Activated naive CD4-positive, alpha-beta T cell treated with anti-CD3 and anti-CD28 coated beads, Interleukin-2, amount 10 ng/mL, durations not matched to agents 7 days and 5 days (primary cell): ENCODE measurements at regions of chr1 and their contacts with region 1.

Region 1: DNA sequence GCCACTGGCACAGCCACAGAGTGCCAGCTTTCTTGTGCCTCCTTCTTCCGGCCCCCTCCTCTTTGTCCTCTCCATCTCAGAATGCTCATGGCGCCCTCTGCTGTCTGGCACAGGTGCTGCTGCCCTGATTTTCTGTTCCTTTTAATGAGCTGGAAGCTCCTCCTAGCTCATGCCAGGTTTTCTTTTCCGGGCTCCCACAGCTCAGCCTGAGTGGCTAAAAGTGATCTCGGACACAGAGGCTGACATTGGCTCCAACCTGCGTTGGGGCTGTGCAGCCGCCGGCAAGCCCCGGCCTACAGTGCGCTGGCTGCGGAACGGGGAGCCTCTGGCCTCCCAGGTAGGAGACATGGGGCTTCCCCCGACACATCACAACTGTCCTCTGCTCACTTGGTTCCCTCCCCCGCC is 18.7 kb downstream of the CNTN2 start:
- DNase-seq: peak; percentile 88
- H3K4me3 Mint-ChIP-seq: no peak overlapping the region
- H3K27ac Mint-ChIP-seq: no peak overlapping the region
- H3K4me1 Mint-ChIP-seq: no peaks in the 10 kb centered on the region
- H3K27me3 Mint-ChIP-seq: peaks cover 12% of the 10 kb centered on the region

Region 2: DNA sequence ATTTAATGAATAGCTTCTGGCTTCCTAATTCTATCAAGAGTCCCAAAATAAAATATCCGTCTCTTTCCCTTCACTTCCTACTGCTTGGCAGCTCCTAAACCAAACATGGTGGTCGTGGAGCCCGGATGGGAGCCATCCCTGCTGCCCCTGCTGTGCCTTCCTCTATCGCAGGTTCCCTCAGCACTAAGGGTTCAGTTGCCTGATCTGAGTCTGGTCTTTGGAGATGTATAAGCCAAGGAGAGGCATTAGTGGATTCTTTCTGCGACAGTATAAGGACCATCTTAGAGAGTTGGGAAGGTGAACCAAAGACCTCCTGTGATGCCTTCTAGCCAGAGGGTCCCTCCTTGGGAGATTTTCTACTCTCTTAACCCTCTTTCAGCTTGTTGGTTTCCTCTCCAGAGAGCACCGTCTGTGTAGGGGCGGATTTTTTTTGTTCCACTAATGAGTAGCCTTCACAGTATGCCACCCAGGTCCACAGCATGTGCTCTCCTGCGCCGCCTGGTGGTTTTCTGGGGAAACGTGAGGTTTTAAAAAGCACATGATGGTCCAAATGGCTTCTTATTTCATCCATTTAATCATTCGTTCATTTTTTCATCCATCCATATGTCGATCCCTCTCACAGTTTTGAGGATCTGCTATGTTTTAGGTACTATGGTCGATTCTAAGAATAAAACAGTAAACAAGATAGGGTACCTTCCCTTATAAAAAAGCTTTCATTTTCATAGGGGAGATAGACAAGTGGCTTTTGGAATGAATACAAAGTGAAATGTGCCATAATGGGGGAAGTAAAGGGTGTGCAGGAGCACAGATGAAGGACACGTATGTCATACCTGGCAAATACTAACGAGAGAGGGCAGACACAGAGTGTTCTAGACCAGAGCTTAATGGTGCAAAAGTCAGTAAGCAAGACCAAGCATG is 120.0 kb before region 1 on chr1:
- CTCF ChIA-PET with region 1: interaction called, 17 read pairs
- DNase-seq: peak; percentile 72
- H3K4me3 Mint-ChIP-seq: no peak overlapping the region
- H3K27ac Mint-ChIP-seq: no peak overlapping the region
- H3K4me1 Mint-ChIP-seq: no peaks in the 10 kb centered on the region
- H3K27me3 Mint-ChIP-seq: peaks cover 27% of the 10 kb centered on the region

Region 3: DNA sequence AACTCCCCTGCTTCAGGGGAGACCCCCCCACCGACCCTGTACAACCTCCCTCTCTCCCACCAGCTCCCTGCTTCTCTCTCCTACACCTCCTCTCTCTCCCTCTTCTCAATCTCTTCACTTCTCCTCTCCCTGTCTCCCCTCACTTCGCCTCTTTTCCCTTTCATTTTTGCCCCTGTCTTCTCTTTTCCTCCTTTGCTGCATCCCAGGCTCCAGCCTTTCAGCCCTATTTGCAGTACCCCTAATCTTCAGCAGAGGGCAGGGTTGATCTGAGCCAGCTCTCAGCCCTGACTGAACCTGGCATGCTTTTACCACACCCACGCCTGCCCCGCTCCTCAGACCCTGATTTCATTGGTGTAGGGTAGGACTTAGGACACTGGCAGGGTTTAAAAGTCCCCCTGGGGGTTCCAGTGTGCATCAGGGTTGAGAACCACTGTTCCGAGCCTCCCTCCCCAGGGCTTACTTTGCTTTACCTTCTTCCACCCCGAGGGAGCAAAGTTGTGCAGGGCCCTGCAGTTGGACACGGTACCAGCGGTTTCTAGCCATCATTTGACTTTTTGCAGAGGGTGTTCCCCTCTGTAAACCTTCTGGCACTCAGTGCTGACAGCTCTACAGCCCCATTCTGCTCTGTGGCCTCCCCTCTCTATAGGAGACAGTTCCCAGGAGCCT is 86.0 kb before region 1 on chr1:
- CTCF ChIA-PET with region 1: interaction called, 83 read pairs
- DNase-seq: peak; percentile 64
- H3K4me3 Mint-ChIP-seq: no peak overlapping the region
- H3K27ac Mint-ChIP-seq: no peak overlapping the region
- H3K4me1 Mint-ChIP-seq: no peaks in the 10 kb centered on the region
- H3K27me3 Mint-ChIP-seq: peaks cover 62% of the 10 kb centered on the region

Region 4: DNA sequence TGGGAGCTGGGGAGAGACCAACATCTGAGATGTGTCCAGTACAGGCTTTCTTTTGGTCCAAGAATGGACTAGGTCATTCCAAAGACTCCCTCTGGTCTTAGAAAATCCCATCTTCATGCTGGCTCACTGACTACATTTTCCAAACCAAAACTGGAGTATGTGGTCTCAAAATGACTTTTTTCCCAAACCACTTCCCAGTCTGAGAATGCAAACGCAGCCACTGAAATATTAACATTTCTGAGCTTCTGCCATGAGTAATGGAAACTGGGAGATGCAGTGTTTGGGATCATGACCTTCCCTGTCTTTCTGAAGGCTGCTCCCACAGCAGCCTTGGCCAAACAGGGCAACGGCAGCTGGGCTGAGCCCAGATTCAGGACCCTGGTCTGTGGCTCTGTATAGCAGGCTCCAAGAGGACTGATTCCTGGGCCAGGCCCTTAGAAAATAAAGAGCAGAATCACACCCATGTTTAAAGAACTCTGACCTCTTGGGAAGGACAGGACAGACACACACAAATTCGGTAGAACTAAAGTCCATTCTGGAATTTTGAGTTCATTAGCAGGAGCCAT is 80.7 kb before region 1 on chr1:
- CTCF ChIA-PET with region 1: interaction called, 83 read pairs
- DNase-seq: no peak
- H3K4me3 Mint-ChIP-seq: no peak overlapping the region
- H3K27ac Mint-ChIP-seq: no peak overlapping the region
- H3K4me1 Mint-ChIP-seq: peaks cover 10% of the 10 kb centered on the region
- H3K27me3 Mint-ChIP-seq: peaks cover 52% of the 10 kb centered on the region

Region 5: DNA sequence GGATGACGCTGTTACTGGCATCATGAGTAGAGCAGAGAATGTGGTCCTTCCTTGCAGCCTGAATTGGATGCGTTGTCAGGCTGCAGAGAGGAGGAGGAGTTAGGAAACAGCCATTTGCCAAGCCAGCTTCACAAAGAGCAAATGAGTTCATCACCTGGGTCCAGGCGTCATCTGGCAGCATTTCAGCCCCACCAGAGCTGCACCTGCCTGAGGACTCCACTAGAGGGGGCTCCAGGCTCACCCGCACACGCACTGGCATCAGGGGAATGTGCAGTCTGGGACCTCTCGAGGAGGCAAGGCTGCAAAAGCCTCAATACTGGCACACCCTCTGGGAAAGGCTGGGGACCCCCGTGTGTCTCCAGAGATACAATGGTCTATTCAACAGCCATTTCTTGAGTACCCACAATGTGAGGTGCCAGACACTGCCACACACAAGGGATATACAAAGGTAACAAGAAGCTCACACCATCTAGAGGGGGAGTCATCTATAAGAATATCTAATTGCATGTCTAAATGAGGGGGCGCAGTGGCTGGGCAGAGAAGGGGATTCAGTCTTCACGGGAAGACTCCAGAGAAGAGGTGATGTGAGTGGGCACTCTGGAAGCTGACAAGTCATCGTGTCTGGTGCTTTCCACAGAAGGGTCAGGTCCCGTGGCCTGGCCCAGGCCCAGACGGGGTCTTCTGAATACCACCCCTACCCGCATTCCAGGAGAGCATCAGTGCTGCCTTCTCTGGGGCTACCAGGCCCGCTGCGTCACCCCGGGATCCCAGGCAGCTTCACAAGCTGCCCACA is 72.2 kb before region 1 on chr1:
- CTCF ChIA-PET with region 1: interaction called, 120 read pairs
- DNase-seq: peak; percentile 75
- H3K4me3 Mint-ChIP-seq: no peak overlapping the region
- H3K27ac Mint-ChIP-seq: no peak overlapping the region
- H3K4me1 Mint-ChIP-seq: peaks cover 14% of the 10 kb centered on the region
- H3K27me3 Mint-ChIP-seq: peaks cover 44% of the 10 kb centered on the region

Region 6: DNA sequence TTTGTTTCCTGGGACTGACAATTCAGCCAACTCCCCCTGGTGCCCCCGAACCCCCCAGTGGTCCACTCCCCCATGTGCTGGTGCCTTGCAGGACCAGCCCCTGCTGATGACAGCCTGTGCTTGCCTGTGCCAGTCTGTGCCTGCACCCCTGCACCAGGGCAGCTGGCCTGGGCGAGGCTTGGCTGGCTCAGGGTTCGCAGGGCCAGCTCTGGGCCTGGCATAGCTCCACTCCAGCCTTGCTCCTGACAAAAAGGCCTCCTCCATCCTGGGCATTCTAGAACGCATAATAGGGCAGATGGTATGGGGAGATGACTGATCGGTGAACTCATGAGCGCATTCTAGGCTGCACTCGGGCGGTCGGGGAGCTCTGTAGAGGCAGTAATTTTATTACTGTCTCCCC is 13.3 kb before region 1 on chr1:
- CTCF ChIA-PET with region 1: interaction called, 16 read pairs
- DNase-seq: no peak
- H3K4me3 Mint-ChIP-seq: no peak overlapping the region
- H3K27ac Mint-ChIP-seq: no peak overlapping the region
- H3K4me1 Mint-ChIP-seq: no peaks in the 10 kb centered on the region
- H3K27me3 Mint-ChIP-seq: peaks cover 52% of the 10 kb centered on the region

Region 7: DNA sequence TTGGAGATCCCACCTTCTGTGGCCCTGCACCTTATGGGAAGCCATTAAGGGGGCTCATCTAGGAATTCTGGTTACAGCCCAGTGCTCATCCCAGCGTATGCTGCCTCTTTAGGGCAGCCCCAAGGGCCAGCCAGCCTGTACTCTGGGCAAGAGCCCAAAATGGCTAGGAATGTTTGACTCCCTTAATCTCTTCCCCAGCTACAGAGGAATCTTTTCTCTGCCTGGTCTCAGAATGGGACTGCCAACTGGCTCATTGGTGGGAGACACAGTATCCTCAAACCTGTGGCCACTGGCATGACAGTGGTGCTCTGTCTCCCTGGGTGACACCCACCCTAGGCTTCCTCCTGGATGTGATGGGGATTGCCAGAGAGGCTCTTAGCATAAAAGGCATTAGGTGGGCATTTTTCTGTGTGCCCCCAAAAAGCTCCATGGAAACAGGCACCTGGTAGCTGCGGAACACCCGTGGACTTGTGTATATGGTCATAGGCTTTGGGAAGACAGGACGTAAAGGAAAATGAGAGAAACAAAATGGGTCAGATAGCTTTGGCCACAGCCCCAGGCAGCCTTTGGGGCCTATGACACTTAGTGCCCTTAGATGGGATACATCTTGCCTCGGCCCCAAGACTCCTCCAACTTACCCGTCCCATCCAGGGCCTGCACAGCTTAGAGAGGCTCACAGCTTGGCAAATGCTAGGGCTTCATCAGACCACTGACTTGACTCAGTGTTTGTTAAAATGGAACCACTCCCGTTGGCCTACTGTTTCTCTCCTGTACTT is 15.7 kb after region 1 on chr1:
- CTCF ChIA-PET with region 1: interaction called, 56 read pairs
- DNase-seq: no peak
- H3K4me3 Mint-ChIP-seq: no peak overlapping the region
- H3K27ac Mint-ChIP-seq: no peak overlapping the region
- H3K4me1 Mint-ChIP-seq: no peaks in the 10 kb centered on the region
- H3K27me3 Mint-ChIP-seq: peaks cover 12% of the 10 kb centered on the region